ENCODE measurements at regions of chr19 and their contacts with region 1.

Region 1: GRCh38 chr19:17255150-17255621 is 9.4 kb downstream of the USHBP1 start:
- DNase-seq: no peak
- ATAC-seq: no peak
- H3K4me3 Mint-ChIP-seq: no peak overlapping the region
- H3K27ac Mint-ChIP-seq: no peak overlapping the region
- H3K4me1 Mint-ChIP-seq: no peaks in the 10 kb centered on the region
- H3K27me3 Mint-ChIP-seq: no peaks in the 10 kb centered on the region
- CTCF ChIP-seq: no peak

Region 2: GRCh38 chr19:17205237-17206140 is 49.7 kb before region 1 on chr19:
- CTCF ChIA-PET with region 1: no interaction called
- POLR2A ChIA-PET with region 1: no interaction called
- intact Hi-C with region 1: no loop called
- DNase-seq: peak; percentile 69
- ATAC-seq: peak; percentile 46
- H3K4me3 Mint-ChIP-seq: no peak overlapping the region
- H3K27ac Mint-ChIP-seq: no peak overlapping the region
- H3K4me1 Mint-ChIP-seq: peaks cover 12% of the 10 kb centered on the region
- H3K27me3 Mint-ChIP-seq: no peaks in the 10 kb centered on the region
- CTCF ChIP-seq: peak; percentile 48

Region 3: GRCh38 chr19:17235618-17236377 is 19.4 kb before region 1 on chr19:
- CTCF ChIA-PET with region 1: interaction called, 10 read pairs
- POLR2A ChIA-PET with region 1: no interaction called
- intact Hi-C with region 1: no loop called
- DNase-seq: peak; percentile 80
- ATAC-seq: peak; percentile 85
- H3K4me3 Mint-ChIP-seq: peak overlapping the region; percentile 81
- H3K27ac Mint-ChIP-seq: peak overlapping the region; percentile 72
- H3K4me1 Mint-ChIP-seq: peaks cover 5% of the 10 kb centered on the region
- H3K27me3 Mint-ChIP-seq: no peaks in the 10 kb centered on the region
- CTCF ChIP-seq: peak; percentile 56